ENCODE measurements at regions of chr9 and their contacts with region 1.

Region 1: DNA sequence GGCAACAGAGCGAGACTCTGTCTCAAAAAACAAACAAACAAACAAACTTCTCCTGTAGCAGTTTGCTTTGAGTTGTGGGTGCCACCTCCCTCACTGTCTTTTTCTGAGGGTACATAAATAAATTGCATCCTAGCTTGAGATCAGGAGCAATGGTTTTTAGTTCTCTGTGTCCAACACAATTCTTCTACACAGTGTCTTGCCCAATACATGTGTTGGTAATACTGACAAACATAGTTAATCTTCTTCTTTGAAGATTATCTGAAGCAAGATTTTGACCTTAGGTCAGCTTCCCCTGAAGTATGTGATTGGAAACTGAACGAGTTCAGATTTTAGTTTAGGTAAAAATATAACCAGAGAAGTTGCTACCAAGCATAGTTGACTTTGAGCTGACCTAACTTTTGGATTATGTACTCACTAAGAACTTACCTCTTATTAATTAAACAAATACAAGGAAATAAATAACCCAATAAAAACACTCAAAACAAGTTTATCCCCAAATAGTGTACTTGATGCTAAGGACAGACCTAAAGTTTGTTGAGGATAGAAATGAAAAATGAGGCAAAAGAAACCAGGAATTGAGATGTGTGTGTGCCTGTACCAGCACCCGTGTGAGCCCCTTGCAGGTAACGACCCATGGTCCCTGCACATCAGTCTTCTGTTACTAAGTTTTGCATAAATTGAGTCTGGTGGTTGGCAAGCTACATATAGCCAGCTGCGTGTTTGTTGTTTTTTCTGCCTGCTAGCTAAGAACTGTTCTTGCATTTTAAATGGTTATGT is 16.2 kb downstream of the TJP2 start:
- DNase-seq: no peak
- ATAC-seq: no peak

Region 2: GRCh38 chr9:69054989-69055388 is 135.3 kb before region 1 on chr9:
- intact Hi-C with region 1: loop called (anchors 5 kb)
- DNase-seq: peak; percentile 13
- ATAC-seq: peak; percentile 53

Measured in sciatic nerve (tissue), 2 donors.